Lower lobe of right lung (tissue), 2 donors: ENCODE measurements at regions of chr15 and their contacts with region 1.

Region 1: DNA sequence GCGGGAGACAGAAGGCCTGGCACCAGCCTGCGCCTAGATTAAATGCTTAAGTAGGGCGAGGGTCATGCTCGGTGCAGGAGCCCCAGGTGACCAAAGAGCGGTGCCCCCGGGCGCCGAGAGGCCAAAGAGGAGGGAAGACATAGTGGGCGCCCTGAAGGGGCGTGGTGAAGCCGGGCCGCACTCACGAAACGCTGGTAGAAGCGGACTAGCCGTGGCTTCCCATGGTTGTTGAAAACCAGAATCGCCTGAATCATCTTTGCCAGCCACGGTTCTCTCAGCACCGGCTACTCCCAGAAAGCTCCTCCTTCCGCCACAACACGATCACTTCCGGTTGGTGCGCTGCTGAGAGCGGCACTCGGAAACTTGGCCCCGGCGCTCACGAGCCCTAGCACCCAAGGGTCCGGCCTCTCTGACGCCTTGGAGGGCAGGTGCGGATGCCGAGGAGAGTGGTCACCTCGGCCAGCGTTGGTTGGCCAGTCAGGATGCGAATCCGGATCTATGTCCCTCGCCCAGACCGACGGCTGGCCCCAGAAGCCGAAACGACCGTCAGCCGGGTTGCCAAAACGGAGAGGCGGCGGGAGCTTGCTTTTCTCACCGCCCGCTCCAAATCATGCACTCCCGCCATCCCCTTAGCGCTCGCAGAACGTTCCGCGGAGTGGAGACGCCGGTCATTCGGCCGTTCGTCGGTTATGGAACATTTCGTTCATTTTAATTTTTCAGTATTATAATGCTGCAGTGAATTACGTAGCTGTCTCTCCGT is at the start of gene AP3S2:
- DNase-seq: peak; percentile 92
- ATAC-seq: peak; percentile 99
- H3K4me3 ChIP-seq: peak within 1 kb of the TSS; percentile 97
- H3K27ac ChIP-seq: peak within 1 kb of the TSS; percentile 95
- H3K4me1 ChIP-seq: peaks cover 27% of the 10 kb centered on the region
- H3K27me3 ChIP-seq: no peaks in the 10 kb centered on the region
- CTCF ChIP-seq: no peak
- total RNA-seq, gene AP3S2: 36.9 TPM

Region 2: DNA sequence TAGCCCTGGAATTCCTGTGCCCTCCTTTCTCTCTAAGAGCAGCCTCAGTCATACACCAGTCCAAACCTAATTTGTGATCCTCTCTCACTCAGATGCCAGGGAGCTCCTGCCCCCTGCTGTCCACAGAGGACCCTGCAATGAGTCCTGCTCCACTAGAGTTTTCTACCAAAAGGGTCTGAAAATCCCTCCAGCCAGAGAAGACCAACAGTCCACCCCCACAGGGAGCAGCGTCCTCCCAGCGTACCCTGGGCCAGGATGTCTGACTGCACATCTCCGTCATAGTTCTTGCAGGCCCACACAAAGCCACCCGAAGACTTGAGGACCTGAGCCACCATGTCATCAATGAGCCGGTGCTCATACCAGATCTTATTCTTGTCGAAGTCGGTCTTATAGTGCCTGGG is 193.0 kb after region 1 on chr15:
- intact Hi-C with region 1: loop called (anchors 10 kb)
- DNase-seq: no peak
- ATAC-seq: peak; percentile 63 to 72
- H3K4me3 ChIP-seq: no peak overlapping the region
- H3K27ac ChIP-seq: no peak overlapping the region
- H3K4me1 ChIP-seq: peaks cover 12% of the 10 kb centered on the region
- H3K27me3 ChIP-seq: no peaks in the 10 kb centered on the region
- CTCF ChIP-seq: peak; percentile 70